CD4-positive, alpha-beta T cell (primary cell): ENCODE measurements at regions of chrX and their contacts with region 1.

Region 1: DNA sequence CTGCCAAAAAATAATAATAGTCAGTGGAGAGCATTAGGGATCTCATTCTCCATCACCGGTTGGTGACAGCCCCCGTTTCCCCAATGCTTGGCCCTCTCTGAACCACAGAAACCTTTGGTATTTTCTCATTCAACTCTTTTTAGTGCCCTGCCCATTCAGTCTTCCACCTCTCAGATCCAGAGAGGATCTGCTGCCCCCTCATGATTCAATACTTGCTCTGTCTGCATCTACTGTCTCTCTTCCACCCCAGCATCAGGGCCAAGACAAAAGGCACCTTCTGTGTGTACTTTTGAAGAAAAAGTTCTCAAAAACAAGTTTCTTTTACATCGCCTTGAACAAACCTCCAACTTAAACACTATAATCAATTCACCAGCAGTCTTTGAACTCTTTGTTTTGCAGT is 19.3 kb downstream of the CLTRN start:
- DNase-seq: no peak
- ATAC-seq: no peak
- H3K4me3 ChIP-seq: no peak overlapping the region
- H3K4me3 Mint-ChIP-seq: no peak overlapping the region
- H3K27ac ChIP-seq: no peak overlapping the region
- H3K27ac Mint-ChIP-seq: no peak overlapping the region
- H3K4me1 ChIP-seq: no peaks in the 10 kb centered on the region
- H3K4me1 Mint-ChIP-seq: peaks cover 12% of the 10 kb centered on the region
- H3K27me3 ChIP-seq: no peaks in the 10 kb centered on the region
- H3K27me3 Mint-ChIP-seq: no peaks in the 10 kb centered on the region
- CTCF ChIP-seq: no peak

Region 2: DNA sequence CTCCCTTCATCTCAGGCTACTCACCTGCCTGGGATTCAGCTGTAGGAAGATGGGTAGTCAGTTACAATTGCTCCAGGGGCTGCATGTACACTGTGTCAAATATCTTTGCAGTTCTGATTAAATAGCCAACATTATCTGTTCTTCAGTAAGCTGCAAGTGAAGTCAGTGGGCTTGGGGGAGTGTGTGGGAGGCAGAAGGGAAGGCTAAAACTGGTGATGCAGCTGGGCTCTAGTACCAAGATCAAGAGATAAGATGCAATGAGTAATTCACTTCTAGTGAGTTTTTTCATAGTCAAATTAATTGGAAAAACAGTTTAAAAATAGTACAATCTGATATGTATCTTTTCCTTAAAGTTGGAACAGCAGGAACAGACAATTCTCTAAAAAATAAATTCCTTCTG is 1155.1 kb before region 1 on chrX:
- CTCF ChIA-PET with region 1: no interaction called
- POLR2A ChIA-PET with region 1: no interaction called
- intact Hi-C with region 1: no loop called
- DNase-seq: no peak
- ATAC-seq: no peak
- H3K4me3 ChIP-seq: no peak overlapping the region
- H3K4me3 Mint-ChIP-seq: no peak overlapping the region
- H3K27ac ChIP-seq: no peak overlapping the region
- H3K27ac Mint-ChIP-seq: no peak overlapping the region
- H3K4me1 ChIP-seq: no peaks in the 10 kb centered on the region
- H3K4me1 Mint-ChIP-seq: no peaks in the 10 kb centered on the region
- H3K27me3 ChIP-seq: no peaks in the 10 kb centered on the region
- H3K27me3 Mint-ChIP-seq: no peaks in the 10 kb centered on the region
- CTCF ChIP-seq: no peak

Region 3: DNA sequence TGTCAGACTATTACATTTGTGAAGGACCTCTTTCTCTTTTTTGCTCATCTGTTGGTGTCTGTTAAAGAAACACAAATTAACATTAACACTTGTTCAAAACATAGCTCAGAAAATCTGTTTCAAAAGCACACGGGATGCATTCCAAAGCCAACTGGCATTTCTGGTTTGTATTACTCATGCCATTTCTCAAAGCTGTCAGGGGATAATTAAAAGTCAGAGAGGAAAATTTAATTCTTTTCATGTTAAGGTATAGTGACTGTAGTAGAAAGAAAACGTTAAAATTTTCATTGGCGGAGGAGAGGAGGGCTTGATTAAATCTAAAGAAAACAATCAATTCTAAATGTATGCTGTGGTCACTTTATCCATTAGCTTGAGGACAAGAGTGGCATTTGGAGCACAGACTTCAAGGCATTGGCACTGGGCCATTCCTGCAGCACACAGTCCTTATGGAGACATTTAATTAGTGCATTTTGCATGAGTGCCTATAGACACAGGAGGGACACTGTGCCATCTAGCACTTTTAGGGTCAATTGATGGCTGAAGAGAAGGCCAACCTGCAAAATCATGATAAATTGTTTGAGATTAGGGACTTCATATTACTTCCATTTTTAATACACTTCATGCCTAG is 1137.1 kb before region 1 on chrX:
- CTCF ChIA-PET with region 1: no interaction called
- POLR2A ChIA-PET with region 1: no interaction called
- intact Hi-C with region 1: no loop called
- DNase-seq: no peak
- ATAC-seq: no peak
- H3K4me3 ChIP-seq: no peak overlapping the region
- H3K4me3 Mint-ChIP-seq: no peak overlapping the region
- H3K27ac ChIP-seq: no peak overlapping the region
- H3K27ac Mint-ChIP-seq: no peak overlapping the region
- H3K4me1 ChIP-seq: no peaks in the 10 kb centered on the region
- H3K4me1 Mint-ChIP-seq: no peaks in the 10 kb centered on the region
- H3K27me3 ChIP-seq: no peaks in the 10 kb centered on the region
- H3K27me3 Mint-ChIP-seq: peaks cover 7% of the 10 kb centered on the region
- CTCF ChIP-seq: no peak

Region 4: DNA sequence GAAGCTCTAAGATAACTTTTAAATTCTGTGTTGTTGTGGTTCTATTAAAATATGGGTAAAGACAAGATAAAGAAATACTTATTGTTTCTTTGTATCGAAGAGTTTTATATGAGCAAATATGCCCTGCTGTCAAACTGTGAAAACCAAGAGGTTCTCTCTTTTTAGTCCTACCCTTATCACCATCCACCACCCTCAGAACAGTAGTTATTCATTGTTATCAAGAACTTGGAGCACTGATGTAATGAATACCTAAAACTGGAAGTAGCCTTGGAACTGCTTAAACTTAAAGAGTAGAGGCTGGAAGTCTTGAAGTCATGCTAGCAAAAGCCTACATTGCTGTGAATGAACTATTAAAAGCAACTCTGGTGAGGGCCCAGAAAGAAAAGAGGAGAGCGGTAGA is 161.4 kb before region 1 on chrX:
- CTCF ChIA-PET with region 1: no interaction called
- POLR2A ChIA-PET with region 1: no interaction called
- intact Hi-C with region 1: no loop called
- DNase-seq: no peak
- ATAC-seq: no peak
- H3K4me3 ChIP-seq: no peak overlapping the region
- H3K4me3 Mint-ChIP-seq: no peak overlapping the region
- H3K27ac ChIP-seq: no peak overlapping the region
- H3K27ac Mint-ChIP-seq: no peak overlapping the region
- H3K4me1 ChIP-seq: no peaks in the 10 kb centered on the region
- H3K4me1 Mint-ChIP-seq: no peaks in the 10 kb centered on the region
- H3K27me3 ChIP-seq: no peaks in the 10 kb centered on the region
- H3K27me3 Mint-ChIP-seq: no peaks in the 10 kb centered on the region
- CTCF ChIP-seq: no peak

Region 5: GRCh38 chrX:15579778-15580747 is 65.2 kb before region 1 on chrX:
- CTCF ChIA-PET with region 1: no interaction called
- POLR2A ChIA-PET with region 1: no interaction called
- intact Hi-C with region 1: loop called in 1 of 2 experiments (anchors 2 kb)
- DNase-seq: no peak
- ATAC-seq: no peak
- H3K4me3 ChIP-seq: no peak overlapping the region
- H3K4me3 Mint-ChIP-seq: no peak overlapping the region
- H3K27ac ChIP-seq: no peak overlapping the region
- H3K27ac Mint-ChIP-seq: no peak overlapping the region
- H3K4me1 ChIP-seq: no peaks in the 10 kb centered on the region
- H3K4me1 Mint-ChIP-seq: no peaks in the 10 kb centered on the region
- H3K27me3 ChIP-seq: no peaks in the 10 kb centered on the region
- H3K27me3 Mint-ChIP-seq: no peaks in the 10 kb centered on the region
- CTCF ChIP-seq: no peak